CD14-positive monocyte (primary cell): ENCODE measurements at regions of chr17 and their contacts with region 1.

Region 1: DNA sequence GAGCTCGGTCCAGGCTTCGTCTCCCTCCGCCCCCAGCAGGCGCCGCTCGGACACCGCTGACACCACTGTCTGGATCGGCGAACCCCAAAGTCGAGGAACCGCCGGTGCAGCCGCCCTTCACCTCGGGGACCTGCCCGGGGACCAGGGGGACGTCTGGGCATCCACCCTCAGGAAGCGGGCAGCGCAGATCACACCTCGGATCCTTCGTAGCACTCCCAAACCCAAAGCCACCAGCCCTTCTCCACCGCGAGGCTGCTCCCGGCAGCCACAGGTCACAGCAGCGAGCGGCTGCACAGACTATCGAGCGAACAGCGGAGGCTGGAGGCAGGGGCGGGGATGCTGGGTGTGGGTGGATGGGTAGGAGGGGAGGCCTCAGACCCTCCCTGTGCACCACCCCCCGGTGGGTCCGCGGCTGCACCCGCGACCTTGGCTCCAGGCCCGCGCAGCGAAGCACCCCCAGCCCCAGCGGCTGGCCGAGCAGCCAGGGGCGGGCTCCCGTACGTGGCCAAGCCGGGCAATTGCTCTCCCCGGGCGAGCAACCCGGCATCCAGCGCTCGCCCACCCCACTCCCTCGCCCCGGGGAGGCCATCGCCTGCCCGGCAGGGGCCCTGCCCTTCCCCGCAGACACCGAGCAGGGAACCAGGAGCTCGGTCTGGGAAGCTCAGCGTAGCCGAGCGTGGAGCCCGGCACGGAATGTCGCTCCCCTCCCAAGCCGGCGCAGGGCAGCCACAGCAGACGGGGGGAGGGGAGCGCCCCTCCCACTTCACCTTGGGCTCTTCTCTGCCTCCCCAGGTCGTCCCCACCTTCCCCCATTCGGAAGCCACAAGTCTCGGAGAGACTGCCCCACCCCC is 1.0 kb downstream of the SDK2 start:
- DNase-seq: peak; percentile 3 to 30 (median 30)
- H3K4me3 ChIP-seq: peak overlapping the region in 2 of 3 experiments; percentile 22 to 63
- H3K4me3 Mint-ChIP-seq: peak overlapping the region; percentile 74 to 92
- H3K27ac ChIP-seq: no peak overlapping the region
- H3K27ac Mint-ChIP-seq: no peak overlapping the region
- H3K4me1 ChIP-seq: peaks cover 21 to 29% of the 10 kb centered on the region in 2 donors
- H3K4me1 Mint-ChIP-seq: peaks cover 19% of the 10 kb centered on the region
- H3K27me3 ChIP-seq: peaks cover 53 to 61% of the 10 kb centered on the region in 2 donors
- H3K27me3 Mint-ChIP-seq: peaks cover 59 to 73% (median 62%) of the 10 kb centered on the region in 3 donors
- CTCF ChIP-seq: peak; percentile 46

Region 2: DNA sequence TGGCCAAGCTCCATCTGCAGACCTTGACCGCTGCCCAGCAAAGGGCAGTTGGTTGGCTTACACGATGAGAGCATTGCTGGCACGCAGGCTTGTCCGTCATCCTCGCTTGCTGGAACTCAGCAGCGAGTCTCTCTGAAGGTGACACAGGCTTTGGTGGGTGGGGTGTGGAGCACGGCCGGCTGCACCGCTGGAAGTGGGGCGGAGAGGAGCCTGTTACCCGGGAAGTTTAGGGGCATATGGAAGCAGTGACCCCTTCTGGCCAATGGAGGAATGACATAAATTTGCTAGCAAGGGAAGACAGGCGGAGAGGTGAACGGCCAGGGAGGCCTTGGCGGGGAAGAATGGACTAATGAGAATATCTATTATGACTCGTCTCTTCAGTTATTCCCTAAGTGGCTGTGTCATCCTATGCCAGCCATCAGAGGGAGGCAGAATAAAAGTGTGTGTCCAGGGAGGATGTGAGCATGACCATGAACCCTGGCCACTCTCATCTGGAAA is 66.9 kb after region 1 on chr17:
- intact Hi-C with region 1: loop called (anchors 5 kb)
- DNase-seq: peak; percentile 49 to 66 (median 66)
- H3K4me3 ChIP-seq: no peak overlapping the region
- H3K4me3 Mint-ChIP-seq: peak overlapping the region in 1 of 2 donors; percentile 61
- H3K27ac ChIP-seq: no peak overlapping the region
- H3K27ac Mint-ChIP-seq: no peak overlapping the region
- H3K4me1 ChIP-seq: peaks cover 17 to 19% of the 10 kb centered on the region in 2 donors
- H3K4me1 Mint-ChIP-seq: peaks cover 18% of the 10 kb centered on the region
- H3K27me3 ChIP-seq: peaks cover 0 to 2% of the 10 kb centered on the region in 2 donors
- H3K27me3 Mint-ChIP-seq: peaks cover 0 to 18% (median 6%) of the 10 kb centered on the region in 3 donors
- CTCF ChIP-seq: peak; percentile 91

Region 3: GRCh38 chr17:73874008-73874720 is 230.9 kb after region 1 on chr17:
- intact Hi-C with region 1: no loop called
- DNase-seq: peak in 1 of 3 donors; percentile 69
- H3K4me3 ChIP-seq: no peak overlapping the region
- H3K4me3 Mint-ChIP-seq: no peak overlapping the region
- H3K27ac ChIP-seq: no peak overlapping the region
- H3K27ac Mint-ChIP-seq: peak overlapping the region in 2 of 7 donors; percentile 15 to 61
- H3K4me1 ChIP-seq: peaks cover 6 to 8% of the 10 kb centered on the region in 2 donors
- H3K4me1 Mint-ChIP-seq: peaks cover 11% of the 10 kb centered on the region
- H3K27me3 ChIP-seq: no peaks in the 10 kb centered on the region
- H3K27me3 Mint-ChIP-seq: peaks cover 2 to 4% (median 2%) of the 10 kb centered on the region in 3 donors
- CTCF ChIP-seq: no peak

Region 4: GRCh38 chr17:73956669-73957465 is 313.6 kb after region 1 on chr17:
- intact Hi-C with region 1: loop called in 1 of 2 experiments (anchors 10 kb)
- DNase-seq: peak in 2 of 3 donors; percentile 22 to 32
- H3K4me3 ChIP-seq: no peak overlapping the region
- H3K4me3 Mint-ChIP-seq: no peak overlapping the region
- H3K27ac ChIP-seq: no peak overlapping the region
- H3K27ac Mint-ChIP-seq: no peak overlapping the region
- H3K4me1 ChIP-seq: peaks cover 14 to 15% of the 10 kb centered on the region in 2 donors
- H3K4me1 Mint-ChIP-seq: peaks cover 10% of the 10 kb centered on the region
- H3K27me3 ChIP-seq: peaks cover 0 to 13% of the 10 kb centered on the region in 2 donors
- H3K27me3 Mint-ChIP-seq: peaks cover 3 to 11% (median 8%) of the 10 kb centered on the region in 3 donors
- CTCF ChIP-seq: peak; percentile 58